OCI-LY7 (cell line): ENCODE measurements at regions of chr1 and their contacts with region 1.

Region 1: GRCh38 chr1:208652296-208653160 is 408.3 kb upstream of the PLXNA2 start:
- DNase-seq: peak; percentile 37
- H3K4me3 ChIP-seq: no peak overlapping the region
- H3K27ac ChIP-seq: no peak overlapping the region
- H3K4me1 ChIP-seq: no peaks in the 10 kb centered on the region
- CTCF ChIP-seq: peak; percentile 85

Region 2: DNA sequence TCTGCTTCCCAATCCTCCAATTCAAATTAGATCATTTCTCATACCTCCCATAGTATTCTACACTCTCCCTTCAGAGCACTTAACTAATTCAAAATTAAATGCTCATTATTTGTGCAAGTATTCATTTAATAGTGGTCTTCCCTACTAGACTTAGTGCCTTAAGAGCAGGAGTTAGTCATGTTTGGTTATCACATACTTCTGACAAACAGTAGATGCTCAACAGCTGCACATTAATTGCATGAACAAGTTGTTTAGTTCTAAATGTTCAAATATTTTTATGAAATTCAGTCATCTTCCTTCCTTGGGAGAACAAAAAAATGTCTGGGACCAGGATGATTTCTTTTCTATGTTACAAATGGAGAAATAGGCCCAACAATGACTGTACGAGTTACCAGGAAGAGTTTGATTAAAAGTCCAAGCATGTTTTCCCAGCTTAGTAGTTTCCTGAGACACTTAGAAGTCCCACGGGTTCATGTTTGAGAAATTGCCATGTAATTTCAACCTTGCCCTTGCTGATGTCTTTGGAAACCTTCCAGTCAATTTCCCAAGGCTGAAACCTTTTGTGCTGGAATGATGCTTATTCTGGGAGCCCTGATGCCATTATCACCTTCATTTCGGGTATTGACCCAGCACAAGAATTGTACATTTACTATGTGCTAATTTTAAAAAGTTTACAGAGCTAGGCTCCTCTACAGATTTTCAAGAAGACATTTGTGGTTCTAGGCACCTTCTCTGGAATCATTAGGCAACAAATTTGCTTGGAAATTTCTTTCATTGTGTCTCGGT is 29.5 kb after region 1 on chr1:
- CTCF ChIA-PET with region 1: no interaction called
- POLR2A ChIA-PET with region 1: no interaction called
- intact Hi-C with region 1: no loop called
- DNase-seq: no peak
- H3K4me3 ChIP-seq: no peak overlapping the region
- H3K27ac ChIP-seq: no peak overlapping the region
- H3K4me1 ChIP-seq: no peaks in the 10 kb centered on the region
- CTCF ChIP-seq: no peak

Region 3: DNA sequence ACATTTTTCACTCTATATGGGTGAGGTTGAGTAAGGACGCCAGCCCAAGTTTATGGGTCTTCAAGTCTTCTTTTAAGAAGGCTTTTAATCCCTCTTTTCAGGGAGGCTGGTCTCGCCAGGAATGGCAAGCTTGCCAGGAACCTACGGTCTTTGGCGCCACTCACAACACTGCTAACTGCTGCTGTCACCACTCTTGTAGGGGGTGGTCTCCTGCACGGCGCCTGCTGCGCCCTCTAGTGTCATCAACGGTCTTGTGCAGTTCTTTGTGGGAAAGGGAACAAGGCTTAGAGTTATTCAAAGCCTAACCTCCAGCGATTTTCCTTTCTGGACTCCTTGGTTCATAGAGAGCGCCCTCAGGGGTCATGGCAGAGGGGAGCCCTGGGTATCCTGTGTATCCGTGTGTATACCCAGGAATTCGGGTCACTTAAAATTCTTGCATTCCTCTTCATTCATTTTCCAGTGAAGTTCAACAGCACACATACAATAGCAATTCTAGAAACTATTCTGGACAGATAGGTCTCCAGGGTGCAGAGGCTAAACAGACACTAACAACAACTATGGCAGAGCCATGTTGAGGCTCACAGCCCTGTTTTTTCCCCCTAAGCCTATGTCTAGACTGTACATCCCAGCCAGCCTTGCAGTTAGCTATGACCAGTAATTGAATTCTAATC is 538.2 kb after region 1 on chr1:
- CTCF ChIA-PET with region 1: no interaction called
- POLR2A ChIA-PET with region 1: no interaction called
- intact Hi-C with region 1: loop called (anchors 5 kb)
- DNase-seq: peak; percentile 42
- H3K4me3 ChIP-seq: no peak overlapping the region
- H3K27ac ChIP-seq: no peak overlapping the region
- H3K4me1 ChIP-seq: no peaks in the 10 kb centered on the region
- CTCF ChIP-seq: peak; percentile 80

Region 4: GRCh38 chr1:209248649-209249279 is 596.2 kb after region 1 on chr1:
- CTCF ChIA-PET with region 1: no interaction called
- POLR2A ChIA-PET with region 1: no interaction called
- intact Hi-C with region 1: loop called (anchors 2 kb)
- DNase-seq: peak; percentile 56
- H3K4me3 ChIP-seq: no peak overlapping the region
- H3K27ac ChIP-seq: no peak overlapping the region
- H3K4me1 ChIP-seq: no peaks in the 10 kb centered on the region
- CTCF ChIP-seq: peak; percentile 89